Naive thymus-derived CD4-positive, alpha-beta T cell (primary cell): ENCODE measurements at regions of chr17 and their contacts with region 1.

Region 1: GRCh38 chr17:5111402-5112204 is at the start of gene ZNF232:
- DNase-seq: peak; percentile 83 to 95 (median 87)
- ATAC-seq: peak; percentile 94
- H3K4me3 ChIP-seq: peak within 1 kb of the TSS; percentile 80
- H3K4me3 Mint-ChIP-seq: peak within 1 kb of the TSS; percentile 82 to 96 (median 92)
- H3K27ac ChIP-seq: peak within 1 kb of the TSS; percentile 74
- H3K27ac Mint-ChIP-seq: peak within 1 kb of the TSS; percentile 59 to 96 (median 88)
- H3K4me1 ChIP-seq: peaks cover 9% of the 10 kb centered on the region in 2 donors
- H3K4me1 Mint-ChIP-seq: peaks cover 14 to 48% (median 36%) of the 10 kb centered on the region in 7 donors
- H3K27me3 ChIP-seq: peaks cover 0 to 3% of the 10 kb centered on the region in 2 donors
- H3K27me3 Mint-ChIP-seq: peaks cover 12 to 19% (median 16%) of the 10 kb centered on the region in 5 donors
- total RNA-seq, gene ZNF232: 5.1 to 20.3 (median 11.2) TPM

Region 2: DNA sequence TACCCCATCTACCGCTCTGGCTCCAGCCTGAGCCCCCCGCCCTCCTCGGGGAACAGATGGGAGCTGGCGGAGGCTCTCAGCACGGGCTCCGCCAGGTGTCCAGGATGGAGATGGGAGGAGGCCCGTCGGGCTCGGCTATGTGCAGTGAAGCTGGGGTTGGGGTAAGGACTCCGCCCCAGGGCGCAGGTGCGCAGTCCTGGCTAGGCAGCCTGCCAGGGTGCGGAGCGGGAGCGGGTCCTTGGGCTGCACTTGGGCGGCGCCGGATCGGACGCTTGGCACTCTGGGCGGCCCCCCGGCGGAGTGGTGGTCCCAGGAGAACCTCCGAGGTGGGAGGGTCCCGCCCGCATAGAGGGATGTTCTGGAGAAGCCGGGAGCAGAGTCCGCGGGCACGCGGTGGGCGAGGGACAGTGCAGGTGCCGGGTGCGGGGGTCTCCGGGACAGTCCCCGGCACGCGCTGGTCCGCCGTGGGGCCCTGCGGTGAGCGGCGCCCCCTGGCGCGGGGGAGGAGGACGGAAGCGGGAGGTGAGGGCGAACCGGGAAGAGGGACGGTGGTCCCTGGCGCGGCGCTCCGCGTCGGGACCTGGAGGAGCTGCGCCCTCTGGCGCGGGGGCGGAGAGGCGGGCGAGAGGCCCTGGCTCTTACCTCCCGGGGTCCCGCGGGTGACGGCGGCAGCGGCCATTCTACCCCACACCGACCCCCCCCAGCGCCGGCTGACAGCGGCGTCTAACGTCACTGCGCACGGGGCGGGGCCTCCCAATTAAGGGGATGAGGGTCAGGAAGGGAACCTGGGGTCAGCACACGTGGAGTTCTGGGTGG is 124.4 kb before region 1 on chr17 and contains the start of gene CAMTA2:
- CTCF ChIA-PET with region 1: no interaction called
- POLR2A ChIA-PET with region 1: interaction called, 3 read pairs
- intact Hi-C with region 1: loop called in 1 of 2 experiments (anchors 5 kb)
- DNase-seq: peak; percentile 70 to 87 (median 80)
- ATAC-seq: peak; percentile 93
- H3K4me3 ChIP-seq: peak within 1 kb of the TSS; percentile 91
- H3K4me3 Mint-ChIP-seq: peak within 1 kb of the TSS; percentile 86 to 94 (median 91)
- H3K27ac ChIP-seq: peak within 1 kb of the TSS; percentile 99
- H3K27ac Mint-ChIP-seq: peak within 1 kb of the TSS; percentile 87 to 95 (median 93)
- H3K4me1 ChIP-seq: peaks cover 10 to 23% of the 10 kb centered on the region in 2 donors
- H3K4me1 Mint-ChIP-seq: peaks cover 29 to 51% (median 46%) of the 10 kb centered on the region in 7 donors
- H3K27me3 ChIP-seq: no peaks in the 10 kb centered on the region
- H3K27me3 Mint-ChIP-seq: no peaks in the 10 kb centered on the region
- total RNA-seq, gene CAMTA2: 55.2 to 90.0 (median 64.1) TPM

Region 3: DNA sequence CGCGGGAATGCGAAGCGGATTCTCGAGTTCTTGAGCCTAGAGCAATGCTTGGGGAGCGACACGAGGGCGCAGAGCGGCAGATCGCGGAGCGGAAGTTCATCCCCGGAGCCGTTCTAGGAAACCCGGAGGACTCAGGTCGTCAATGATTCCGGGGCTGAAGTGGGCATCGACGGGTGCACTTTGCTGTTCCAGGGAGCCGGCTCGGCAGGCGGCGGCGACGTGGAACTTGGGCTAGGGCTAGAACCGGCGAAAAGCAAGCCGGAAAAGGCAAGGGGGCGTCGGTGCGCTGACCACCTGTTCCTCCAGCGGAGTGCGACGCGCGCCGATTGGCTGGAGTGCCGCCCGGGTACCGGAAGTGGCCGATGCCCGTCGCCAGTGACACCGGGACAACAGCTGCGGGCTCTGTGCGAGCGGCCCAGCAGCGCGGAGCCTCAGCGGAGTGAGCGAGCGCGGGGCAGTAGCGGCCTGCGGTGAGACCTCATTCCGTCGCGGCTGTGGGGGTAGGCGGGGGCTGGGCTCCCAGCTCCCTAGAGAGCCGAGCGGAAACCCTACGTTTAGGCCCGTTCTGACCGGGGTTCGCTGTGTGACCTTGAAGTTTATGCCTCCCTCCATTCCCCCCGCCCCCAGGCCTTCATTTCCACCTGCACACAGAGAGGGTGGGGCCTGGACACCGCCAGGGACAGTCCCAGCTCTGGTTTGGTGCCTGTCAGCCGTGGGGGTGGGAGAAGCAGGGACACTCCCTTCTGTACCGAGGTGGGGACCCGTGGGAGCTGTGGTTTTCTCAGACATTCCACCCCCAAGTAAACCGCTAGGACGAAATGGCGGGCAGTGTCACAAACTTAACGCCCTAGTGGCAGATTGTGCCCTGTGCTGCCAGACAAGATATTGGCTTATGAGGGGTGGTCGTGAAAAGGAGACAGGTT is 33.2 kb before region 1 on chr17 and contains the start of gene ZFP3:
- CTCF ChIA-PET with region 1: no interaction called
- POLR2A ChIA-PET with region 1: interaction called, 7 read pairs
- intact Hi-C with region 1: loop called in 1 of 2 experiments (anchors 1 kb)
- DNase-seq: peak; percentile 47 to 77 (median 67)
- ATAC-seq: peak; percentile 85
- H3K4me3 ChIP-seq: peak within 1 kb of the TSS; percentile 81
- H3K4me3 Mint-ChIP-seq: peak within 1 kb of the TSS; percentile 89 to 98 (median 95)
- H3K27ac ChIP-seq: peak within 1 kb of the TSS; percentile 81
- H3K27ac Mint-ChIP-seq: peak within 1 kb of the TSS; percentile 87 to 96 (median 94)
- H3K4me1 ChIP-seq: peaks cover 13 to 15% of the 10 kb centered on the region in 2 donors
- H3K4me1 Mint-ChIP-seq: peaks cover 12 to 41% (median 35%) of the 10 kb centered on the region in 7 donors
- H3K27me3 ChIP-seq: no peaks in the 10 kb centered on the region
- H3K27me3 Mint-ChIP-seq: peaks cover 0 to 2% (median 0%) of the 10 kb centered on the region in 5 donors
- total RNA-seq, gene ZFP3: 3.5 to 14.8 (median 5.7) TPM

Region 4: GRCh38 chr17:5097101-5097834 is 14.3 kb before region 1 on chr17:
- CTCF ChIA-PET with region 1: no interaction called
- POLR2A ChIA-PET with region 1: interaction called, 8 read pairs
- intact Hi-C with region 1: loop called in 1 of 2 experiments (anchors 1 kb)
- DNase-seq: peak in 7 of 9 donors; percentile 29 to 58 (median 48)
- ATAC-seq: peak; percentile 87
- H3K4me3 ChIP-seq: peak overlapping the region; percentile 59
- H3K4me3 Mint-ChIP-seq: peak overlapping the region; percentile 28 to 92 (median 89)
- H3K27ac ChIP-seq: no peak overlapping the region
- H3K27ac Mint-ChIP-seq: peak overlapping the region in 4 of 9 donors; percentile 25 to 59 (median 48)
- H3K4me1 ChIP-seq: no peaks in the 10 kb centered on the region
- H3K4me1 Mint-ChIP-seq: peaks cover 6 to 16% (median 12%) of the 10 kb centered on the region in 7 donors
- H3K27me3 ChIP-seq: no peaks in the 10 kb centered on the region
- H3K27me3 Mint-ChIP-seq: peaks cover 0 to 20% (median 0%) of the 10 kb centered on the region in 5 donors

Region 5: GRCh38 chr17:5226940-5227878 is 115.6 kb after region 1 on chr17:
- CTCF ChIA-PET with region 1: no interaction called
- POLR2A ChIA-PET with region 1: no interaction called
- intact Hi-C with region 1: no loop called
- DNase-seq: peak in 2 of 9 donors; percentile 22 to 27
- ATAC-seq: peak; percentile 74
- H3K4me3 ChIP-seq: peak overlapping the region; percentile 33
- H3K4me3 Mint-ChIP-seq: peak overlapping the region in 8 of 10 donors; percentile 38 to 64 (median 46)
- H3K27ac ChIP-seq: no peak overlapping the region
- H3K27ac Mint-ChIP-seq: peak overlapping the region in 8 of 9 donors; percentile 74 to 92 (median 79)
- H3K4me1 ChIP-seq: peaks cover 11 to 45% of the 10 kb centered on the region in 2 donors
- H3K4me1 Mint-ChIP-seq: peaks cover 5 to 50% (median 32%) of the 10 kb centered on the region in 7 donors
- H3K27me3 ChIP-seq: no peaks in the 10 kb centered on the region
- H3K27me3 Mint-ChIP-seq: no peaks in the 10 kb centered on the region